ENCODE measurements at regions of chr11 and their contacts with region 1.

Region 1: DNA sequence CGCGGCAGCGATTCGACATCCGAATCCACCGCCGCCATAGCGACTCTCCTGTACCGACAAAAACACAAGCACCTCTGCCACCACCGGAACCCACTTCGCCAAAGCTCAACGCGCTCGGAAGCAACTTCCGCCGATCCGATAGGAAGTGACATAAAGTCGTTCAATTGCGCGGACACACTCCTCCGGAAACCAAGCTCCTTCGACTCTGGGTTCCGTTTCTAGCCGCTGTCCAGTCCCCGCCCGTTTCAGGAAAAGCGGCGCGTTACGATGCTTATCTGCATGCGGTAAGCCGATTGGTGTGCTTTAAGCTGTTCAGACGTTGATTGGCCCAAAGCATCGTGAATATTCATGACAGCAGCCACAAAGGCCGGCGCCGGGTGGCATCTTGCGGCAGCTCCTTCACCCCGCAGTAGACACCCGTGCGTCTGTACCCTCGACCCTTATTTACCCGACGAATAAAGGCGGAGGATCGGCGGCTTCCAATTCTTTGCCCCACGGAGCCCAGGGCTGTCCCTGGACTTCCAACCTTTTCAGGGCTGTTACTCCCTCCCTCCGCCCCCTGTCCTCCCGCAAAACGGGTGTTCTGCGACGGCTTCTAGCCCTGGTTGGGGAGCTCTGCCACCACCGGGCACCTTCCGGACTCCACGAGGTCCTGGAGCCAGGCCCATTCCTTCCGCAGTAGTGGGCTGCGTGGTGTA is at the start of gene TUT1:
- DNase-seq: peak; percentile 92 to 99
- H3K4me3 ChIP-seq: peak within 1 kb of the TSS; percentile 68 to 86
- H3K27ac ChIP-seq: peak within 1 kb of the TSS; percentile 95 to 96
- H3K4me1 ChIP-seq: peaks cover 10 to 20% of the 10 kb centered on the region in 2 donors
- H3K27me3 ChIP-seq: no peaks in the 10 kb centered on the region
- CTCF ChIP-seq: no peak
- total RNA-seq, gene TUT1: 18.4 TPM

Region 2: DNA sequence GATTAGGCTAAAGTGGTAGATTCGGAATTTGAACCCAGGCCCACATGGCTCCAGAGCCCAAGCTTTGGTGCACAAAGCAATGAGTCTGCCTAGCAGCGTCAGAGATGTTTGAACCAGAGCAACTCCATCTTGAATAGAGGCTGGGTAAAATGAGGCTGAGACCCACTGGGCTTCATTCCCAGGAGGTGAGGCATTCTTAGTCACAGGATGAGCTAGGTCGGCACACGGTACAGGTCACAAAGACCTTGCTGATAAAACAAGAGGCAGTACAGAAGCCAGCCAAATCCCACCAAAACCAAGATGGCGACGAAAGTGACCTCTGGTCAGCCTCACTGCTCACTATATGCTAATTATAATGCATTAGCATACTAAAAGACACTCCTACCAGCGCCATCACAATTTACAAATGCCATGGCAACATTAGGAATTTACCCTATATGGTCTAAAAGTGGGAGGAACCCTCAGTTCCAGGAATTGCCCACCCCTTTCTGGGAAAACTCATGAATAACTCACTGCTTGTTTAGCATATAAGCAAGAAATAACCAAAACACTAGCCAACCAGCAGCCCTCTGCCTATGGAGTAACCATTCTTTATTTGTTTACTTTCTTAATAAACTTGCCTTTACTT is 951.7 kb before region 1 on chr11:
- intact Hi-C with region 1: no loop called
- DNase-seq: no peak
- H3K4me3 ChIP-seq: no peak overlapping the region
- H3K27ac ChIP-seq: no peak overlapping the region
- H3K4me1 ChIP-seq: no peaks in the 10 kb centered on the region
- H3K27me3 ChIP-seq: no peaks in the 10 kb centered on the region
- CTCF ChIP-seq: no peak

Region 3: DNA sequence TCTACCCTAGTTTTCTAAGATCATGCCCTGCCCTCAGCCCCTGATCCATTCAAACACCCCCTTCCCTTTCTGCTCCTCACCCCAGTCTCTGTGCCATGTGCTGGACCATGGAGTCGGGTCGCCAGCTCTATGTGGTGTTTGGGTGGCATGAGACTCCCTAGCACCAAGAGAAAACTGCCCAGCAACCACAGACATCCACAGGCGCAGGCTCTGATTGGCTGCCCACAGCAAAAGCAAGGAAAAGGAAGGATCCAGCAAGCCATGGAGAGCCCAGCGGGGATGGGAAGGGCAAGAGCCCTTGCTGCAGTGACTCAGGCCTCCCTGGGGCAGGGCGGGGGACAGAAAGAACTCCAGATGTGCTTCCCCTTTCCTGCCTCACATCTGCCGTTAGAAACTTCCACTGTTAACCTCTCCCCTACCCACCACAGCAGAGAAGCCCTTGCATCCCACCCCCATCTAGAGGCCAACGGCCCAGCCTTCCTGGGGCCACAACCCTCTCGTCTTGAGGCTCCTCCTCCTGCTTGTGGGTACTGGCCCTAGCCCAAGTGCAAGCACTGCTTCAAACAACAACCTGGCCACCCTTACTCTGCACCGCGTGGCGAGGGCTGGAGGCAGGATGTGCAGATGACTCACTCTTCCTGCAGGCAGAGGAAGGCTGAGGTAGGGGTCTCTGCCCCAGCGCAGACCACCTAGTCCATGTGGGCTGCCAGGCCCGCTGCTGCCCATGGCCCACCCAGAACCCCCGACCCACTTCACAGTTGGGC is 35.3 kb before region 1 on chr11:
- intact Hi-C with region 1: loop called (anchors 1 kb)
- DNase-seq: peak; percentile 85 to 97
- H3K4me3 ChIP-seq: peak overlapping the region; percentile 36 to 42
- H3K27ac ChIP-seq: peak overlapping the region; percentile 94 to 96
- H3K4me1 ChIP-seq: peaks cover 43 to 69% of the 10 kb centered on the region in 2 donors
- H3K27me3 ChIP-seq: no peaks in the 10 kb centered on the region
- CTCF ChIP-seq: no peak

Region 4: GRCh38 chr11:62573592-62574362 is 17.8 kb before region 1 on chr11 and contains the start of gene EEF1G:
- intact Hi-C with region 1: loop called (anchors 1 kb)
- DNase-seq: peak; percentile 98 to 100
- H3K4me3 ChIP-seq: peak within 1 kb of the TSS; percentile 78 to 89
- H3K27ac ChIP-seq: peak within 1 kb of the TSS; percentile 89
- H3K4me1 ChIP-seq: peaks cover 10 to 15% of the 10 kb centered on the region in 2 donors
- H3K27me3 ChIP-seq: no peaks in the 10 kb centered on the region
- CTCF ChIP-seq: no peak
- total RNA-seq, gene EEF1G: 1,083 TPM

Region 5: DNA sequence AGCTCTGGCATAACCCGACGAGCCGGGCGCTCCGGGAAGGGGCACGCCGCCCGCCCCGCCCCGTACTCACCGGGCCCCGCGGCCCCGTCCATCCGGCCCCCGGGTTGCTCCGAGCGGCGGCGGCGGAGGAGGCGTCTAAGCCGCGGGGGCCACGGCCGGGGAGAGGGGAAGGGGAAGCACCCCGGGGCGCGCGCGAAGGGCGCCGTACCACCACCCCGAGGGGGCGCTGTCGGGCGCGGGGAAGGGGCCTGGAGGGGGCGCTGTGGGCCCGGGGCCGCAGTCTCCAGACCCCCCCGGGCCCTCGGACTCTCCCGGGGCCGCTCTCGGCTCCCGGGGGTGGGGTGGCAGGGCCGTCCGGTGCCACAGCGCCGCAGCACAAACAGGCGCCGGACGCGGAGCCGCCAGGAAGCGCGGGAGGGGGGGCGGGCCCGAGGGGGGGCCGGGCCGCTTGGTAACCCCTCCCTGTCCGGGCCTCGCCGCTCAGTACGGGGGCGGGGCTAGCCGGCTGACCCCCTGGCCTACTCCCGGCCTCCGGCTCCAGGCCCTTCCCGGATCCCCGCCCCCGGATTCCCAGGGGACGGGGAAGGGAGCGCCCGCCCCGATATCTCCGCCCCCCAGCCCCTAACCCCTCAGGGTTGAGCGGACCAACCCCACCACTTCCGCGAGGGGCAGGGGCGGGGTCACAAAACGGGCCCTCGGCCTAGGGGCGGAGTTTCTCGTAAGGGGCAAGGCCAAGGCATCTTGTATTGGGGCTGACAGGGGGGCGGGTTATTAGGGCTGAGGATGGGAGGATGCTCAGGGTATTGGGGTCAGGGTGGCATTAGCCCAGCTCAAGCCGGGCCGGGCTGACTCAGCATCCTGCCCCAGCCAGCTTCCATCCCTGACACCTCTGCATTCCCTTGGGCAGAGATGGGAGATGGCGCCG is 21.0 kb after region 1 on chr11 and contains the starts of genes EML3 and ROM1:
- intact Hi-C with region 1: loop called (anchors 1 kb)
- DNase-seq: peak; percentile 81 to 97
- H3K4me3 ChIP-seq: peak within 1 kb of the TSS; percentile 82 to 92
- H3K27ac ChIP-seq: peak within 1 kb of the TSS; percentile 98 to 99
- H3K4me1 ChIP-seq: peaks cover 11 to 27% of the 10 kb centered on the region in 2 donors
- H3K27me3 ChIP-seq: no peaks in the 10 kb centered on the region
- CTCF ChIP-seq: peak; percentile 73 to 95 (median 87)
- total RNA-seq, gene EML3: 207 TPM
- total RNA-seq, gene ROM1: not detected

Region 6: DNA sequence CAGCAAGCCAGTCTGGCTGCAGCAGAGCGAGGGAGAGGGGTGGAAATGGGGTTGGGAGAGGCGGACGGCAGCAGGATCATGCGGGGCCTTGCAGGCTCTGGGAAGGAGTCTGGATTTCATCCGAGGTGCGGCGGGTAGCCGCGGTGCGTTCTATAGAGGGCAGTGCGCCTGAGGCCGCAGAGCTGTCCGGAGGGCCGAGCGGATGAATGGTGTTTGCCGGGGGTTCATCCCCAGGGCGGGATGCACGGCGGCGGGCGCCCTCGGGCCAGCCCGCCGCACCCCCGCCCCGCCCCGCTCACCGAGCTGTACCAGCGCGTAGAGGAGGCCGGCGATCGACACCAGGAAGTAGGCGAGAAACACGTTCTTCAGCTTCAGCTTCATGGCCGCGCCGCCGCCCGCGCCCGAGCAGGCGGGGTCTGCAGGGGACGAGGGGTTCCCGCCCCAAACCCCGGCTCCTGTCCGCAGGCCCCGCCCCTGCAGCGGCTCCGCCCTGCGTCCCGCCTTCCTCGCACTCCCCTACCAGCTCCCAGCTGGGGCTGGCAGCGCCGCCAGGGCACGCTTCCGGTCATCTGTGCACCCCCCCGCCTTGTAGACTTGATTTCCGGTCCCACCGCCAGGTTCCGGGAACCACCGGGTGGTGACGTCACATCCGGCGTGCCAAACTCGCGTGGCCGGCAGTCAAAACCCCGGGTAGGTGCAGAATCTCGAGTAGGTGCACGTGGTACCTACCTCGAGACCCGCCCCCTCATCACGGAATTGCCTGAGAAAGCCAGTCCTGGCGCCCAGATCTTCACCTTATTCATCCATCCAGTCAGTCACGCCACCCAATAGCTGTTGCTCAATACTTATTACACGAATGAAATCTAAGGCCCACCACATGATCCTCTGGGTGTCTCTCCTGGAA is 30.2 kb after region 1 on chr11 and contains the start of gene B3GAT3:
- intact Hi-C with region 1: loop called (anchors 2 kb)
- DNase-seq: peak; percentile 92 to 99
- H3K4me3 ChIP-seq: peak within 1 kb of the TSS; percentile 69 to 93
- H3K27ac ChIP-seq: peak within 1 kb of the TSS; percentile 67 to 92
- H3K4me1 ChIP-seq: peaks cover 4 to 10% of the 10 kb centered on the region in 2 donors
- H3K27me3 ChIP-seq: no peaks in the 10 kb centered on the region
- CTCF ChIP-seq: peak in 1 of 3 experiments; percentile 1
- total RNA-seq, gene B3GAT3: 61.3 TPM

Region 7: DNA sequence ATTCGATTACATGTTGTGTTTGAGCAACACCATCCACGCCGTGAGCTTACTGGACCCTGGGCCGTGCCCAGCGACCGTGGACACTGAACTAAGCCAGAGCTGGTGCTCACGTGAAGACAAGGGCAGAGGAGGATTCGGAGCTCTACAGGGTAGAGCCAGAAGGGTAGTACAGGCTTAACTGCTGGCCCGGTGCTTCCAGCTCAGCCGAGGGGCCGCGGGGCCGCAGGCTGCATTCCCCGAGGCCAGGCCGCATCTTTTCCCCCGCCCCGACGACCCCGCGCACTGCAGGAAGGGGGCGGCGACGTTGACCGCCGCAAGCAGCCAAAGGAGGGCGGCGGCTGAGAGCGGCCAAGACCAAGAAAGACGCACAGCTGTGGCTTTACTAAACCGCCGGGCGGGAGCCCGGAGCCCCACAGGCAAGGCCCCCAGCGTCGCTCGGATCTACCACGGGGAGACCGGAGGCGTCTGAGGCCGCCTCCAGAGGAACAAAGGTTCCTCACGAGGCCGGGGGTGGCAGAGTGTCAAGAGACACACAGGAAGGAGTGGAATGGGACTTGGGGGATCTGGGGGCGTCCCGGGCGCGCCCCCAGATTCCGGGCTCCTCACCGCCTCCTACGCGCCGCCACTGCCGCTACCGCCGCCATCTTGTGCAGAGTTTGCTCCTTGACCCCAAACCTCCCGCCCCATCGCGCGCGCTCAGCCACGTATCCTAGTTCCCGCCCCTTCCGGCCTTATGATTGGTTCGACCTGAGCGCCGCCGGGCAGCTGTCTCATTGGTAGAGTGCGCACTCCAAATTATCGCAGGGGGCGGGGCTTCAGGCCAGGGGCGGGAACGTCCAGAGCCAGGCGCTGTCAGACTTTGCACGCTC is 54.6 kb after region 1 on chr11 and contains the start of gene GANAB:
- intact Hi-C with region 1: loop called (anchors 2 kb)
- DNase-seq: peak; percentile 97 to 100
- H3K4me3 ChIP-seq: peak within 1 kb of the TSS; percentile 66 to 92
- H3K27ac ChIP-seq: peak within 1 kb of the TSS; percentile 89 to 92
- H3K4me1 ChIP-seq: peaks cover 4 to 14% of the 10 kb centered on the region in 2 donors
- H3K27me3 ChIP-seq: no peaks in the 10 kb centered on the region
- CTCF ChIP-seq: no peak
- total RNA-seq, gene GANAB: 326 TPM

Region 8: DNA sequence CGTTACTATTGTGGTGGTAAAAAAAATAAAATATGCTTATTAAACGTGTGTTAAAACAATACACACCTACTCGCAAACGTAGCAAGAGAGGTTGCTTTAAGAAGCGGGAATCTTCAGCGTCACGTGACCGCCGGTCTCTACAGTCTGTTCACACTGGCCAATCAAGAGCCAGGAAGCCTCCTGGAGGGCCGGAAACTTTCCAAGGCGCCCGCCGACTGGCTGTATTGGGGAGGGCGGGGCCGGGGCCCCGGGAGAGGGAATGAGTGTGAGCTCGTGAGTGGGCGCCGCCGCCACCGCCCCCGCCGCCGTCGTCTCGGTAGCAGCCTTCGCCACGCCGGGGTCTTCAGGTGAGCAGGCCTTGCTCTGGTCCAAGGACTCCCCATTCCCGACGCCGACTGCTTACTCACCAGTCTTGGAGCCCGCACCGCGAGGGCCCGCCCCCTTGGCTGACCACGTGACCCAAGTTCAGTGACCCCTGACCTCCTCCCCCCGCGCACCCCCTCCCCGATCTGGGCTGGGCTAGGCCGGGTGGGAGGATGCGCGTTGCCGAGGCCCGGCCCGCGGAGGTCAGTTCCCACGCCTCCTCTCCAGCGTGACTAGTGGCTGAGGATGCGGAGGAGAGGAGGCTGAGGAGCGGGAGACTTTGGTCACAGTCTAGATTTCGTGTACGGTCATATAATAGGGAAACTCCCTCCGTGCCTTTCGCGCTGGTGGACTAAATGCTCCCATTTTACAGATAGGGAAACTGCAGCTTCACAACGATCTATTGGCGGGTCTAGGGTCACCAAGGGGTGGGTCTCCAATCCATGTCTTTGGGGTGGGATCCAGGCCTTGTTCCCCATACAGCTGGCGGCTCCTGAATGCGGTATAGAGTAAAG is 179.8 kb after region 1 on chr11 and contains the start of gene TAF6L:
- intact Hi-C with region 1: loop called (anchors 5 kb)
- DNase-seq: peak; percentile 94 to 99
- H3K4me3 ChIP-seq: peak within 1 kb of the TSS; percentile 73 to 84
- H3K27ac ChIP-seq: peak within 1 kb of the TSS; percentile 93 to 97
- H3K4me1 ChIP-seq: peaks cover 3 to 17% of the 10 kb centered on the region in 2 donors
- H3K27me3 ChIP-seq: no peaks in the 10 kb centered on the region
- CTCF ChIP-seq: no peak
- total RNA-seq, gene TAF6L: 51.7 TPM

Measured in ascending aorta (tissue), 2 donors.